A549 (cell line): ENCODE measurements at regions of chr17 and their contacts with region 1.

Region 1: GRCh38 chr17:77054936-77055335 is 85.8 kb upstream of the SEC14L1 start:
- DNase-seq: no peak
- ATAC-seq: peak; percentile 27 to 39; a peak in 5 of 6 replicates
- H3K4me3 ChIP-seq: no peak overlapping the region
- H3K27ac ChIP-seq: peak overlapping the region; percentile 26 to 86; a peak in 5 of 6 replicates
- H3K4me1 ChIP-seq: peaks cover 14% of the 10 kb centered on the region
- CTCF ChIP-seq: no peak
- EP300 ChIP-seq: no peak
- POLR2A ChIP-seq: no peak
- RAD21 ChIP-seq: no peak

Region 2: DNA sequence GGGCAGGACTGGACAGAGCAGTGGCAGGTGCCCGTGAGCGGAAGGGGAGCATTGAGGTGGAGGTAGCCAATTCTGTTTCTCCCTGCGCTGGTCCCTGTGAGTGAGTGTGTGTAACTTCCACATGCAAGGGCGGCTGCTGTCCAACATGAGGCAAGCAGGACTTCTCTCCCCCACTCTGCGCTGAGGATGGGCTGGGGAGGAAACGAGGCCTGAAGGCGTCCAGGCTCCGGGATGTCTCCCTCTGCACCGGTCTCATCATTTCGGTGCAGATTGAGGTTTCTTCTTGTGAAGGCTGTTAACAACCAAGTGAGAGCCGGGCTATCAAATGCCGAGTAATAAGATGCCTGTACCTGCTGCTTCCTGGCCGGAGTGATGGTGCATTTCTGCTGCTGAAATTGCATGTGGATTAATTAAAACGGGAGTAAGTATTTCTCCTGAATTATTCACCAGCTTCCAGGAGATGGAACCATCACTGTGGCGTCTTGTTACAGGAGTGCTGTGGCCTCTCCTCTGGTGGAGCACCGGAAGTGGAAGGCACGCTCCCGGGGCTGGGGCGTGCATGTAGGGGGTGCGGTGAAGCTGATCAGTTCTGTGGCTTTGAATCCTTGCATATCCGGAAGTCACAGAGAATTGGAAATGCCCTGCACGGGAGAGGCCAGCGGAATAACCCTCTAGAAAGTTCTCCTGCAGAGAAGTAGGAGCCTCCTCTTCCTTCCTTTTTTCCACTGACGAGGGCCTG is 228.4 kb before region 1 on chr17:
- CTCF ChIA-PET with region 1: interaction called, 17 read pairs
- POLR2A ChIA-PET with region 1: no interaction called
- DNase-seq: no peak
- ATAC-seq: peak; percentile 15 to 20; a peak in 1 of 6 replicates
- H3K4me3 ChIP-seq: no peak overlapping the region
- H3K27ac ChIP-seq: no peak overlapping the region
- H3K4me1 ChIP-seq: no peaks in the 10 kb centered on the region
- CTCF ChIP-seq: no peak
- EP300 ChIP-seq: no peak
- POLR2A ChIP-seq: no peak
- RAD21 ChIP-seq: no peak

Region 3: DNA sequence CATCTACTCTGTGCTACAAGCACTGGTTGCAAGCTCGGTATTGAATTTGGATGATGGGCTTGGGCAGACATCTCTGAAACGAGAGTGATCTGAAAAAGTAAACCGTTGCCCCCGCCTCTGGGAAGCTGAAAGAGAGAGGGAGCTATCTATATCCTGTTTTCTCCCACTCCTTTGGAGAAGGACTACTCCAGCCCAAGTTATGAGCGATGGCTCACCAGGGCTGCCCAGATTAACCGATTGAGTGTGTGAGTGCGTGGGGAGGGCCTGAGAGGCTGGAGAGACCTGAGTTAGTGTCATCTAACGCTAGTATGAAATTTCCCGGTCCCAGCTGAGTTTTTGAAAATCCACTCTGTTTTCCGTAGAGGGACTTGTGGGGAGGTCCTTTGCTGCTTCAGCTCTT is 175.2 kb before region 1 on chr17:
- CTCF ChIA-PET with region 1: interaction called, 44 read pairs
- POLR2A ChIA-PET with region 1: no interaction called
- DNase-seq: no peak
- ATAC-seq: no peak
- H3K4me3 ChIP-seq: no peak overlapping the region
- H3K27ac ChIP-seq: 0 out of 6 replicates have a peak overlapping the region, but pooled peaks of 1 of the 2 experiments have one; percentile 25
- H3K4me1 ChIP-seq: no peaks in the 10 kb centered on the region
- CTCF ChIP-seq: no peak
- EP300 ChIP-seq: no peak
- POLR2A ChIP-seq: no peak
- RAD21 ChIP-seq: no peak

Region 4: DNA sequence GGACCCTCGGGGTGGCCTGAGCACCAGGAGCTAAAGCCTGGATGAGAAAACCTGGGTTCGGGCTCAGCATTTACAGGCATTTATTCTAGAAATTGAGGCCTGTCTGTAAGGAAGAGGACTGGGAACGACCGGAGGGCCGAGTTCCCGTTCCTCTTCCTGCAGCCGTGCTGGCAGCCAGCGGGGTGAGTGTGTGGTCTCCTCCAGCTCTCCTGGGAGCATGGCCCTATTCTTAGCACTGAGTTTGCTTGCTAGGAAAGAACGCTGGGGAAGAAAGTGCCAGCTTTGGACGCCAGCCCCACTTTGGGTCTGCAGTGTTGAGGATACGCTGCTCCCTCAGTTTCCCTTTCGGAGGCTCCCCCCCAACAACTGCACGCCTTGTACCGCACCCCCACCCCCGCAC is 137.1 kb before region 1 on chr17:
- CTCF ChIA-PET with region 1: interaction called, 19 read pairs
- POLR2A ChIA-PET with region 1: no interaction called
- DNase-seq: no peak
- ATAC-seq: no peak
- H3K4me3 ChIP-seq: no peak overlapping the region
- H3K27ac ChIP-seq: no peak overlapping the region
- H3K4me1 ChIP-seq: no peaks in the 10 kb centered on the region
- CTCF ChIP-seq: no peak
- EP300 ChIP-seq: no peak
- POLR2A ChIP-seq: no peak
- RAD21 ChIP-seq: no peak

Region 5: DNA sequence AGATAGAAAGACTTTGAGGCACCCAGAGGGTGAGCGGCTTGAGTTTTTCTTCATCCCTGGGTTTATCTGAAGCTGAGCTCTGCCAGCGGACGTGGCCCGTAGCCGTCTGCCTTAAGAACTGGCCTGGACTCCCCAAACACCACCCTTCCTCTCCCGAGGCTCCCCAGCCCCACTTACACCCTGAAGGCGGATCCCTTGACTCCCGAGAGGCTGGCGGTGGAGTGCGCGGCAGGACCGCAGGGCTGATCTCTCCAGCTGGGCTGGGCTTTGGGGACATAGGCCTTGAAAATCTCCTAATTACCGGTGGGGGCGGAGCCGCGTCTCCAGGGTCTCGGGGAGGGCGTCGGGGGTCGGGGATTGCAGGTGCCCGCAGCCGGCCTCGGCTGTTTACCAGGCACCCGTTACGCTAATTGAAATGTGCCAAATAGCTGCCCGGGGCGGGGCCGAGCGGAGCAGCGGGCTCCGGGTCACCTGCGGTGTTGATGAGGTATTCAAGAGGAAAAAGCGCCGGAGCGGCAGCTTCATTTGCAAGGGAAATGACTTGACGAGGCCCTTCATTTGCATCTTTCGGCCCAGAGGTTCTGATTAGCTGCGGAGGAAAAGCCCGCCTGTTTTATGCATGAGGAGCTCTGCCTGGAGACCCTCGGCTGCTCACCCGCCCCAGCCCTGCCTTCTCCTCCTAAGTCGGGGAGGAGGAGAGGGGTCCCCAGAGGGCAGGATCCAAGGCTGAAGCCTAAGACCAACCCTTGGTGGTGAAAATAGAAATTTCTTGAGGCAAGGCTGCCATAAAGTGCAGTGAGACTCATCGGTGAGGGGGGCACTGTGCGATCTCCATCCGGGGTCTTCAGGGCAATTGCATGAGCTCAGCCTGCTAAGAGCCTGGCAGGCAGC is 86.0 kb before region 1 on chr17:
- CTCF ChIA-PET with region 1: interaction called, 26 read pairs
- POLR2A ChIA-PET with region 1: interaction called, 3 read pairs
- DNase-seq: no peak
- ATAC-seq: no peak; a peak in 1 of 6 replicates
- H3K4me3 ChIP-seq: no peak overlapping the region
- H3K27ac ChIP-seq: peak overlapping the region in 1 of 2 experiments; percentile 33; a peak in 2 of 6 replicates
- H3K4me1 ChIP-seq: peaks cover 8% of the 10 kb centered on the region; the same call in 2 of the 3 replicates
- CTCF ChIP-seq: no peak
- EP300 ChIP-seq: no peak
- POLR2A ChIP-seq: no peak
- RAD21 ChIP-seq: no peak

Region 6: GRCh38 chr17:77019955-77020379 is 35.0 kb before region 1 on chr17:
- CTCF ChIA-PET with region 1: interaction called, 41 read pairs
- POLR2A ChIA-PET with region 1: no interaction called
- DNase-seq: no peak
- ATAC-seq: no peak
- H3K4me3 ChIP-seq: no peak overlapping the region
- H3K27ac ChIP-seq: no peak overlapping the region
- H3K4me1 ChIP-seq: no peaks in the 10 kb centered on the region
- CTCF ChIP-seq: no peak
- EP300 ChIP-seq: no peak
- POLR2A ChIP-seq: no peak
- RAD21 ChIP-seq: no peak

Region 7: DNA sequence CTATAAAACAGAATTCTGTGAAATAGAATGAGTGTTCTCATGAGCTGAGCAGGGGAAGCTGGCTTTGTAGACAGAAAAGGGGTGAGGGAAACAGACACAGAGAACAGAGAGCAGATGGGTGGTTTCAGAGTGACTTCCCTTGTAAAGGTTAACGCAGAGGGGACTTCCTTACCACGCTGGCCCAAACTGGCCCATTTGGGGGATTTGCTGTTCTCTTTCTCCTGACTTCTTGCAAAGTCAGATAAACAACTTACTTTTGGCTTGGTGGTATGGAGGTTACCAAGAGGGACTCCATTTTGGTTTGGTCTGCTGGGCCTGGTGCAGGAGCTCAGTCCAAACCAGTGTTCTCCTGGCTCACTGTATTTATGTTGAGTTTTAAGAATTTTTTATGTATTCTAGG is 134.2 kb after region 1 on chr17:
- CTCF ChIA-PET with region 1: no interaction called
- POLR2A ChIA-PET with region 1: no interaction called
- DNase-seq: no peak
- ATAC-seq: no peak
- H3K4me3 ChIP-seq: no peak overlapping the region
- H3K27ac ChIP-seq: no peak overlapping the region
- H3K4me1 ChIP-seq: no peaks in the 10 kb centered on the region
- CTCF ChIP-seq: no peak
- EP300 ChIP-seq: no peak
- POLR2A ChIP-seq: no peak
- RAD21 ChIP-seq: no peak